CD4-positive, alpha-beta memory T cell (primary cell): ENCODE measurements at regions of chr10 and their contacts with region 1.

Region 1: GRCh38 chr10:119080521-119081260 is at the start of gene EIF3A:
- DNase-seq: peak; percentile 88 to 94 (median 91)
- H3K4me3 ChIP-seq: peak within 1 kb of the TSS; percentile 93 to 99
- H3K4me3 Mint-ChIP-seq: peak within 1 kb of the TSS; percentile 97 to 99 (median 99)
- H3K27ac ChIP-seq: peak within 1 kb of the TSS; percentile 98
- H3K27ac Mint-ChIP-seq: peak within 1 kb of the TSS; percentile 97 to 99 (median 99)
- H3K4me1 ChIP-seq: peaks cover 44% of the 10 kb centered on the region
- H3K4me1 Mint-ChIP-seq: peaks cover 28 to 61% (median 39%) of the 10 kb centered on the region in 4 donors
- H3K27me3 ChIP-seq: no peaks in the 10 kb centered on the region
- H3K27me3 Mint-ChIP-seq: no peaks in the 10 kb centered on the region
- total RNA-seq, gene EIF3A: 122 to 129 TPM

Region 2: GRCh38 chr10:118521415-118522117 is 559.1 kb before region 1 on chr10:
- CTCF ChIA-PET with region 1: no interaction called
- POLR2A ChIA-PET with region 1: no interaction called
- intact Hi-C with region 1: no loop called
- DNase-seq: no peak
- H3K4me3 ChIP-seq: no peak overlapping the region
- H3K4me3 Mint-ChIP-seq: no peak overlapping the region
- H3K27ac ChIP-seq: no peak overlapping the region
- H3K27ac Mint-ChIP-seq: no peak overlapping the region
- H3K4me1 ChIP-seq: no peaks in the 10 kb centered on the region
- H3K4me1 Mint-ChIP-seq: no peaks in the 10 kb centered on the region
- H3K27me3 ChIP-seq: no peaks in the 10 kb centered on the region
- H3K27me3 Mint-ChIP-seq: peaks cover 14 to 22% of the 10 kb centered on the region in 2 donors

Region 3: GRCh38 chr10:119028900-119029612 is 51.6 kb before region 1 on chr10:
- CTCF ChIA-PET with region 1: no interaction called
- POLR2A ChIA-PET with region 1: interaction called, 12 read pairs
- intact Hi-C with region 1: loop called (anchors 2 kb)
- DNase-seq: peak; percentile 69 to 84 (median 73)
- H3K4me3 ChIP-seq: peak overlapping the region in 1 of 2 donors; percentile 28
- H3K4me3 Mint-ChIP-seq: peak overlapping the region; percentile 78 to 85 (median 80)
- H3K27ac ChIP-seq: no peak overlapping the region
- H3K27ac Mint-ChIP-seq: peak overlapping the region in 3 of 7 donors; percentile 64 to 73 (median 72)
- H3K4me1 ChIP-seq: peaks cover 7% of the 10 kb centered on the region
- H3K4me1 Mint-ChIP-seq: peaks cover 6 to 30% (median 15%) of the 10 kb centered on the region in 4 donors
- H3K27me3 ChIP-seq: no peaks in the 10 kb centered on the region
- H3K27me3 Mint-ChIP-seq: no peaks in the 10 kb centered on the region

Region 4: GRCh38 chr10:119103903-119104652 is 23.4 kb after region 1 on chr10 and contains the start of gene DENND10:
- CTCF ChIA-PET with region 1: interaction called, 8 read pairs
- POLR2A ChIA-PET with region 1: interaction called, 179 read pairs
- intact Hi-C with region 1: loop called (anchors 1 kb)
- DNase-seq: peak; percentile 56 to 71 (median 60)
- H3K4me3 ChIP-seq: peak within 1 kb of the TSS; percentile 52 to 59
- H3K4me3 Mint-ChIP-seq: peak within 1 kb of the TSS; percentile 79 to 88 (median 86)
- H3K27ac ChIP-seq: peak within 1 kb of the TSS; percentile 54
- H3K27ac Mint-ChIP-seq: peak within 1 kb of the TSS; percentile 72 to 95 (median 91)
- H3K4me1 ChIP-seq: peaks cover 34% of the 10 kb centered on the region
- H3K4me1 Mint-ChIP-seq: peaks cover 14 to 46% (median 34%) of the 10 kb centered on the region in 4 donors
- H3K27me3 ChIP-seq: no peaks in the 10 kb centered on the region
- H3K27me3 Mint-ChIP-seq: no peaks in the 10 kb centered on the region
- total RNA-seq, gene DENND10: 48.0 to 53.4 TPM

Region 5: DNA sequence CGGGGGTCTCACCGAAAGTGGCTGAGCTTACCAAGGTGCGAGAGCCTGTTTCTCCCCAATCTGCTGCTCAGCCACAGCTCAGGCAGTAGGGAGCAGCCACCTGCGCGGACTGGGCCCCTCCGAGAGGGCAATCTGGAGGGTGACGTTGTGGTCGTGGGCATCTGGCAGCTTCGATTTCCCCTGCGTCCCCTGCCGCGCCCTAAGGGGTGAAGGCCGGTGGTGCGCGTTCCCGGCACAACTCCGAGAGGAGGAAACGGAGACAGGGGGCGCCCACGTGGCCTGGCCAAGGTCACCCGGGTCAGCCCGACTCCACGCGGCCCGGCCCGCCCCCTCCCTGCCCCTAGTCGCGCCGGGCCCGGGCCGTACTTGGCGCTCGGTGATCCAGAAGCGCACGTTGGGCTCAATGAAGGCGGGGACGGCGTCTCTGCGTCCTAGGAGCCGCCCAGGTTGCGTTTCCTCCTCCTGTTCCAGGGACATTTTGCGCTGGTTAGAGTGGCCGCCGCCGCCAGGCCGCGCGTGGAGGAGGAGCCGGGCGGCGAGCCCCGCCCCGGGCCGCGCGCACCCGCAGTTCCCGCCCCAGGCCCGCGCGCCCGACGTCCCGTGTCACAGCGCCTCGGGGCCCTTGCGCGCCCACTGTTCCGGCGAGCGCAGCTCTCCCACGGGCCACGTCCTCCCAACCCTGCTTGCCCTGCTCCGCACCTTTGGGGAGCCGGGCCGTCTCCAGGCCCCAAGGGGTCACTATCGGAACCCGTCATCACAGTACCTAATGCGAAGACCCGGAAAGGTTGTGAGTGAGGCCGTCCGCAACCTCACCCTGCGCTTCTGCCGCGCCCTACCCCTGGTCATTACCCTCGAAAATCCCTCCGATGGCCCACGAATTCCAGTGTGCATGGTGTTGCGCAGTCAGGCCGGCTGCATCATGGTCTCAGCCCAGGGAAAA is 84.8 kb after region 1 on chr10 and contains the start of gene SFXN4:
- CTCF ChIA-PET with region 1: no interaction called
- POLR2A ChIA-PET with region 1: interaction called, 11 read pairs
- intact Hi-C with region 1: no loop called
- DNase-seq: peak; percentile 76 to 87 (median 85)
- H3K4me3 ChIP-seq: peak within 1 kb of the TSS; percentile 73 to 92
- H3K4me3 Mint-ChIP-seq: peak within 1 kb of the TSS; percentile 90 to 94 (median 92)
- H3K27ac ChIP-seq: peak within 1 kb of the TSS; percentile 65
- H3K27ac Mint-ChIP-seq: peak within 1 kb of the TSS; percentile 87 to 96 (median 95)
- H3K4me1 ChIP-seq: peaks cover 20% of the 10 kb centered on the region
- H3K4me1 Mint-ChIP-seq: peaks cover 9 to 43% (median 27%) of the 10 kb centered on the region in 4 donors
- H3K27me3 ChIP-seq: no peaks in the 10 kb centered on the region
- H3K27me3 Mint-ChIP-seq: no peaks in the 10 kb centered on the region
- total RNA-seq, gene SFXN4: 17.2 to 18.5 TPM

Region 6: GRCh38 chr10:119305860-119306513 is 225.3 kb after region 1 on chr10:
- CTCF ChIA-PET with region 1: no interaction called
- POLR2A ChIA-PET with region 1: no interaction called
- intact Hi-C with region 1: loop called (anchors 1 kb)
- DNase-seq: peak; percentile 78 to 98 (median 81)
- H3K4me3 ChIP-seq: peak overlapping the region; percentile 66 to 70
- H3K4me3 Mint-ChIP-seq: peak overlapping the region; percentile 87 to 94 (median 90)
- H3K27ac ChIP-seq: peak overlapping the region; percentile 75
- H3K27ac Mint-ChIP-seq: peak overlapping the region; percentile 96 to 99 (median 98)
- H3K4me1 ChIP-seq: peaks cover 62% of the 10 kb centered on the region
- H3K4me1 Mint-ChIP-seq: peaks cover 46 to 76% (median 63%) of the 10 kb centered on the region in 4 donors
- H3K27me3 ChIP-seq: no peaks in the 10 kb centered on the region
- H3K27me3 Mint-ChIP-seq: peaks cover 0 to 6% of the 10 kb centered on the region in 2 donors